Heart right ventricle (tissue), 16 donors: ENCODE measurements at regions of chr4 and their contacts with region 1.

Region 1: GRCh38 chr4:126604268-126604867 is 1028.4 kb upstream of the INTU start:
- DNase-seq: no peak
- ATAC-seq: no peak
- H3K4me3 ChIP-seq: no peak overlapping the region
- H3K27ac ChIP-seq: no peak overlapping the region
- H3K4me1 ChIP-seq: no peaks in the 10 kb centered on the region
- H3K27me3 ChIP-seq: no peaks in the 10 kb centered on the region
- CTCF ChIP-seq: peak; percentile 28 to 74 (median 67)

Region 2: GRCh38 chr4:125762537-125762936 is 841.8 kb before region 1 on chr4:
- intact Hi-C with region 1: loop called in 1 of 10 experiments (anchors 10 kb)
- DNase-seq: no peak
- ATAC-seq: no peak
- H3K4me3 ChIP-seq: no peak overlapping the region
- H3K27ac ChIP-seq: no peak overlapping the region
- H3K4me1 ChIP-seq: no peaks in the 10 kb centered on the region
- H3K27me3 ChIP-seq: no peaks in the 10 kb centered on the region
- CTCF ChIP-seq: peak in 1 of 9 donors; percentile 7

Region 3: GRCh38 chr4:126658411-126658810 is 54.0 kb after region 1 on chr4:
- intact Hi-C with region 1: no loop called
- DNase-seq: no peak
- ATAC-seq: no peak
- H3K4me3 ChIP-seq: no peak overlapping the region
- H3K27ac ChIP-seq: no peak overlapping the region
- H3K4me1 ChIP-seq: peaks cover 0 to 6% (median 0%) of the 10 kb centered on the region in 9 donors
- H3K27me3 ChIP-seq: no peaks in the 10 kb centered on the region
- CTCF ChIP-seq: no peak